Calu3 (cell line): ENCODE measurements at regions of chr22 and their contacts with region 1.

Region 1: DNA sequence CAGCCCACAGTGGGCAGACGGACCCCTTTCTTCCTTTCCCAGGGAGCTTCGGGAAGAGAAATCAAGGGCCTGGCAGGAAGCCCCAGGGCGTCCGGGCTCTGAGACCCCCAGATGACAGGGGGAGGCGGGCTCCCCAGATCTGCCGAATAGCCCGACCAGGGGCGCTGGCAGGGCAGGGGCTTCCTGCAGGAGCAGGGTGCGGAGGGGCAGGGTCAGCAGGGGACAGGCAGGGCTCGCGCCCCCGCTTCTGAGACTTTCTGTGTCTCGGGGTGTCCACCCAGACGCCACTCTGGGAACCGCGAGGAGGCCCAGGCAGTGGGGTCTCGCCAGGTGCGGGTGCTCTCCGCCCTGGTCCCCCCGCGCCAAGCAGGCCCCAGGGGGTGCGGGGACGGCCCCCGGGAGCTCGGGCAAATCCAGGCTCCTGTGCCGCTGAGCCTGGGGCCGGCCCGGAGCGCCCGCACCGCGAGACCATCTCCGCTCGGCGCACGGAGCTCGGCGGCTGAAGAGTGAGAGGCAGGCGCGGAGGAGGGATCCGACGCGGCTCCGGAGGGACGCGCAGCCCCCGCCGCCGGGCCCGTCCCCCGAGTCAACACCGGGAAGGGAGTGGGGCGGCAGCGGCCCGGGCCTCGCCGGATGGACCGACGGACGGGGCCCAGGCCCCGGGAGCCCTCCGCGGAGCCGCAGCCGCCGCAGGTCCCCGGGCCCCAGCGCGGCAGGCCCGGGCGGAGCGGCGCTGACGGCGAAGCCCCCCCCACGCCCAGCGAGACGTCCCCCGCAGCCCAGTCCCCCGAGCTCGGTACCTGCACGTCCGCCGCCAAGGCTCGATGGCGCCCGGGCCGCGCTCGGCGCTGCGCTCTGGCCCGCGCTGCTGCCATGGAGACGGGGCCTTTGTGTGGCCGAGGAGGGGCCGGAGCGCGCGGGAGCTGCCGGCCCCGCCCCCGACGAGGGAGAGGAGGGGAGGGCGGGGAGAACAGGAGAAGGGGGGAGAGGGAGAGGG is at the start of gene PLXNB2:
- DNase-seq: peak; percentile 86
- H3K4me3 Mint-ChIP-seq: peak within 1 kb of the TSS; percentile 67
- H3K27ac Mint-ChIP-seq: peak within 1 kb of the TSS; percentile 84
- H3K4me1 Mint-ChIP-seq: peaks cover 39% of the 10 kb centered on the region
- H3K27me3 Mint-ChIP-seq: no peaks in the 10 kb centered on the region
- CTCF ChIP-seq: no peak
- total RNA-seq, gene PLXNB2: 298 and 337 TPM in 2 replicates

Region 2: GRCh38 chr22:48662476-48663135 is 1644.4 kb before region 1 on chr22:
- CTCF ChIA-PET with region 1: interaction called, 18 read pairs
- intact Hi-C with region 1: no loop called
- DNase-seq: no peak
- H3K4me3 Mint-ChIP-seq: no peak overlapping the region
- H3K27ac Mint-ChIP-seq: no peak overlapping the region
- H3K4me1 Mint-ChIP-seq: no peaks in the 10 kb centered on the region
- H3K27me3 Mint-ChIP-seq: no peaks in the 10 kb centered on the region
- CTCF ChIP-seq: no peak

Region 3: GRCh38 chr22:50129121-50129736 is 177.8 kb before region 1 on chr22:
- CTCF ChIA-PET with region 1: no interaction called
- intact Hi-C with region 1: no loop called
- DNase-seq: no peak
- H3K4me3 Mint-ChIP-seq: no peak overlapping the region
- H3K27ac Mint-ChIP-seq: no peak overlapping the region
- H3K4me1 Mint-ChIP-seq: no peaks in the 10 kb centered on the region
- H3K27me3 Mint-ChIP-seq: peaks cover 50% of the 10 kb centered on the region
- CTCF ChIP-seq: no peak

Region 4: GRCh38 chr22:50293441-50294318 is 13.4 kb before region 1 on chr22:
- CTCF ChIA-PET with region 1: interaction called, 26 read pairs
- intact Hi-C with region 1: no loop called
- DNase-seq: peak; percentile 88
- H3K4me3 Mint-ChIP-seq: peak overlapping the region; percentile 90
- H3K27ac Mint-ChIP-seq: peak overlapping the region; percentile 63
- H3K4me1 Mint-ChIP-seq: peaks cover 61% of the 10 kb centered on the region
- H3K27me3 Mint-ChIP-seq: no peaks in the 10 kb centered on the region
- CTCF ChIP-seq: no peak